ENCODE measurements at regions of chr17 and their contacts with region 1.

Region 1: DNA sequence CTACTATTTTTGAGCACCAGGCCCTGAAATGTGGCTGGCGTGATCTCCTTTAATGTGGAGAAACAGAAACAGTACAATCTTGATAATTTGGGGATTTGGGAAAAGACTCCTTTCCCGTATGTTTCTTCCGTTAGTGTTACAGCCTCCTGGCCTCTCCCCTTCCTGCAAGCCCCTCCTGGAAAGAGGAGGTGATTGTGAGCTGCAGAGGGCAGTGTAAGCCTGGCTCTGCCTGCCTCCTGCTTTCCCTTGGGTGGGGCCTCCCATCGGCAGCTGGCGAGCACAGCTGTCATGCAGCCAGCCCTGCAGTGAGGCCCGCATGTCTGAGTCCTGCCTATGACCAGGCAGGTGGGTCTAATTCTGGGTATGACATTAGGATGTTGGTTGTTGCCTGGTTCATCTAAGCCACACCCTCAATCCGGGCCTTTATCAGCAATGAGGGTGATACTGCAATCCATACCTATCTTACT is 48.7 kb upstream of the WSB1 start:
- DNase-seq: peak; percentile 89
- H3K4me3 Mint-ChIP-seq: peak overlapping the region; percentile 49
- H3K27ac Mint-ChIP-seq: peak overlapping the region; percentile 74
- H3K4me1 Mint-ChIP-seq: peaks cover 48% of the 10 kb centered on the region
- H3K27me3 Mint-ChIP-seq: peaks cover 4% of the 10 kb centered on the region
- CTCF ChIP-seq: peak; percentile 68

Region 2: DNA sequence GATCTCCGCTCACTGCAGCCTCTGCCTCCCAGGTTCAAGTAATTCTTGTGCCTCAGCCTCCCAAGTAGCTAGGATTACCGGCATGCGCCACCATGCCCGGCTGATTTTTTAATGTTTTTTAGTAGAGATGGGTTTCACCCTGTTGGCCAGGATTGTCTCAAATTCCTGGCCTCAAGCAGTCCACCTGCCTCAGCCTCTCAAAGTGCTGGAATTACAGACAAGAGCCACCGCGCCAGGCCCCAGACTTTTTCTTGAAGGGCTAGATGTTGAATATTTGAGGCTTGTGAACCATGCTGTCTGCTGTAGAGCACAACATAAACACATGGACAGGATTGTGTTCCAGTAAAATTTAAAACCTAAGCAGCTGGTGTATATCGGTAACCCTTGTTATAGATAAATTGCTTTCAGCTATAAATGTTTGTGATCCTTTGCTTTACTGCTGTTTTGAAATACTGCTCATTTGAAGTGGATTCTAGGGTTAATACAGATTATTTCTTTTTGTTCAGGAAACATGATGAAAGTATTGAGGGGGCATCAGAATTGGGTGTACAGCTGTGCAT is 61.1 kb after region 1 on chr17:
- CTCF ChIA-PET with region 1: interaction called, 3 read pairs
- POLR2A ChIA-PET with region 1: interaction called, 13 read pairs
- intact Hi-C with region 1: no loop called
- DNase-seq: no peak
- H3K4me3 Mint-ChIP-seq: no peak overlapping the region
- H3K27ac Mint-ChIP-seq: no peak overlapping the region
- H3K4me1 Mint-ChIP-seq: peaks cover 14% of the 10 kb centered on the region
- H3K27me3 Mint-ChIP-seq: no peaks in the 10 kb centered on the region
- CTCF ChIP-seq: no peak

Region 3: DNA sequence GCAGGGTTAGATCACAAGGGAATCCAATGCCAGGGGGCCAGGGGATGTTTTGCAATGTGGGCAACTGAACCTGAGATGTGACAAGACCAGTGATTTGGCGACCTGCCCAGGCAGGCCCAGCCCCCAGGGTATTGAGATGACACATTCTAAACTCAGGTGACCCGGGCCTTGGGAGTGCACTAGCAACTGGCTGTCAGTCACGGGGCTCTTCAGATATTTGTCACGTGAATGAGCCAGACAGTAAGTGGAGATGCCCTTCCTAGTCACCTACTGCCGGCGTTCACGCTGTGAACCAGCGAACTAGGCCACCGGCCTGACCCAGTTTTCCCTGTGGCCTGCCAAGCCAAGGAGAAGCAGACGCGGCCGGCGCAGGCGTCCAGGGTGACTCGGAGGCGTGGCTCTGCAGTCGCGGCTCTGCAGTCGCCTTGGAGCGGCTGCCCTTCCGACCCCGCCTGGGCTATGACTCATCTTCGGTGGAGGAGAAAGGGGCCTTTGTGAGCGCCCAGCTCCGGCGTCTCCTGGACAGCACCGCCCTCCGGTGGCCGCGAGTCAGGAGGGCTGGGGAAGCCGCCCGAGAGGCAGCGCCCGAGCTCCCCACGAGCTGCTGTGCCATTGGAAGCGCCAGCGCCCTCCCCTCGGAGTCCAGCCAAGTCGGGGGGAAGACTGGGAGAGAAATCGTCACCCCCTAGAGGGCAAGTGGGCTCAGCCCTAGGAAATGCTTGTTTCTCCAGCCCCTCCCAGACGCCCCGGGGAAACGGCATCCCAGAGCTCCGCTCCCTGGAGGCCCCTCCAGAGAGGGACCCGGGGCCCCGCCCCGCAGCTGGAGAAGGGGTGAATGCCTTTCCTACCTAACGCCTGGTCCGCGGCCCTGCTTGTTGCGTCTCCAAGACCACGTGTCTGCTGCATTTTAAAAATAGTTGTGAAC is 87.5 kb after region 1 on chr17:
- CTCF ChIA-PET with region 1: interaction called, 29 read pairs
- POLR2A ChIA-PET with region 1: interaction called, 10 read pairs
- intact Hi-C with region 1: loop called (anchors 1 kb)
- DNase-seq: peak; percentile 98
- H3K4me3 Mint-ChIP-seq: peak overlapping the region; percentile 71
- H3K27ac Mint-ChIP-seq: peak overlapping the region; percentile 79
- H3K4me1 Mint-ChIP-seq: peaks cover 34% of the 10 kb centered on the region
- H3K27me3 Mint-ChIP-seq: no peaks in the 10 kb centered on the region
- CTCF ChIP-seq: peak; percentile 98

Region 4: GRCh38 chr17:27430882-27431491 is 185.7 kb after region 1 on chr17:
- CTCF ChIA-PET with region 1: no interaction called
- POLR2A ChIA-PET with region 1: no interaction called
- intact Hi-C with region 1: loop called (anchors 2 kb)
- DNase-seq: peak; percentile 66
- H3K4me3 Mint-ChIP-seq: no peak overlapping the region
- H3K27ac Mint-ChIP-seq: no peak overlapping the region
- H3K4me1 Mint-ChIP-seq: no peaks in the 10 kb centered on the region
- H3K27me3 Mint-ChIP-seq: no peaks in the 10 kb centered on the region
- CTCF ChIP-seq: peak; percentile 60

Region 5: DNA sequence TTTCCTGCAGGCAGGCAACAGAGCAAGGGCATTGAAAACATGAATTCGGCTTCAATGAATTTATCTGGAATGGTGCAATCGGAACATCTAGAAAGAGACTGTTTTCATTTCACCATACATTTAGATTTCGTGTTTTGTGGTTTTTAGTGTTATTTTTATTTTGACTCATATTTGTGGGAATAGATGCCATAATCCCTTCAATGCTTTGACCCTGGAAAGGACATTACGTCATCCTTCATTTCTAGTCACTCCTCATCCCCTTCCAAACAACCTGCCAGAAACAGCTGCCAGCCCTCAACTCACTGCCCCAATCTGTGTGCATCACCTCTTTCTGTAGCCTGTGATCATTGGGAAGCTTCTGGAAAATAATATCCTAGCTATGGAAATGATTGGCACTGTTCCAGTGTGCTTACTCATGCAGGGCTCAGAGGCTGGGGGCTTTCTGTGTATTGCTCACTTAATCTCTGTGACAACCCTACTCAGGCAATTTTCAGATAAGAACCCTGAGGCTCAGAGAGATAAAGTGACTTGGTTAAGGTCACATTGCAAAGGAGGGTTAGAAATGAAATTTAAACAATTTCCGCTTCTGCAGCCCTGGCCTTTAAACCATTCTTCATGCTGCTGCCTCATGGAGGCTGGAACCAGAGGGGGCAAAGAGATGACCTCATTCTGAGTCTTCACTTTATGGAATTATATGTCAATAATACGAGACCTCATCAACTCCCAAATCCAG is 201.5 kb after region 1 on chr17:
- CTCF ChIA-PET with region 1: no interaction called
- POLR2A ChIA-PET with region 1: no interaction called
- intact Hi-C with region 1: loop called (anchors 5 kb)
- DNase-seq: peak; percentile 97
- H3K4me3 Mint-ChIP-seq: no peak overlapping the region
- H3K27ac Mint-ChIP-seq: no peak overlapping the region
- H3K4me1 Mint-ChIP-seq: peaks cover 18% of the 10 kb centered on the region
- H3K27me3 Mint-ChIP-seq: peaks cover 61% of the 10 kb centered on the region
- CTCF ChIP-seq: no peak

Measured in MCF 10A (cell line).